H1 (cell line): ENCODE measurements at regions of chr2 and their contacts with region 1.

Region 1: GRCh38 chr2:229118927-229119326 is 152.2 kb downstream of the PID1 start:
- DNase-seq: no peak
- H3K4me3 ChIP-seq: no peak overlapping the region
- H3K27ac ChIP-seq: no peak overlapping the region
- H3K4me1 ChIP-seq: no peaks in the 10 kb centered on the region
- H3K27me3 ChIP-seq: no peaks in the 10 kb centered on the region
- CTCF ChIP-seq: no peak
- EP300 ChIP-seq: no peak
- POLR2A ChIP-seq: no peak
- RAD21 ChIP-seq: no peak

Region 2: GRCh38 chr2:229133155-229133772 is 14.3 kb after region 1 on chr2:
- CTCF ChIA-PET with region 1: interaction called, 10 read pairs
- POLR2A ChIA-PET with region 1: no interaction called
- DNase-seq: no peak
- H3K4me3 ChIP-seq: no peak overlapping the region
- H3K27ac ChIP-seq: no peak overlapping the region
- H3K4me1 ChIP-seq: no peaks in the 10 kb centered on the region
- H3K27me3 ChIP-seq: no peaks in the 10 kb centered on the region
- CTCF ChIP-seq: peak in 2 of 3 experiments; percentile 50 to 58; a peak in 2 of 4 replicates
- EP300 ChIP-seq: no peak
- POLR2A ChIP-seq: no peak
- RAD21 ChIP-seq: peak; percentile 85 to 86